Activated T-helper 1 cell treated with anti-CD3 and anti-CD28 coated beads, Interleukin-12 subunit alpha, Interleukin-12 subunit beta, Interleukin-2, Interleukin-4 antibody, amounts not matched to agents 30 ng/mL and 10 ng/mL and 1 ng/mL, durations not matched to agents 14 hours and 24 hours and 36 hours (primary cell): ENCODE measurements at regions of chr1 and their contacts with region 1.

Region 1: DNA sequence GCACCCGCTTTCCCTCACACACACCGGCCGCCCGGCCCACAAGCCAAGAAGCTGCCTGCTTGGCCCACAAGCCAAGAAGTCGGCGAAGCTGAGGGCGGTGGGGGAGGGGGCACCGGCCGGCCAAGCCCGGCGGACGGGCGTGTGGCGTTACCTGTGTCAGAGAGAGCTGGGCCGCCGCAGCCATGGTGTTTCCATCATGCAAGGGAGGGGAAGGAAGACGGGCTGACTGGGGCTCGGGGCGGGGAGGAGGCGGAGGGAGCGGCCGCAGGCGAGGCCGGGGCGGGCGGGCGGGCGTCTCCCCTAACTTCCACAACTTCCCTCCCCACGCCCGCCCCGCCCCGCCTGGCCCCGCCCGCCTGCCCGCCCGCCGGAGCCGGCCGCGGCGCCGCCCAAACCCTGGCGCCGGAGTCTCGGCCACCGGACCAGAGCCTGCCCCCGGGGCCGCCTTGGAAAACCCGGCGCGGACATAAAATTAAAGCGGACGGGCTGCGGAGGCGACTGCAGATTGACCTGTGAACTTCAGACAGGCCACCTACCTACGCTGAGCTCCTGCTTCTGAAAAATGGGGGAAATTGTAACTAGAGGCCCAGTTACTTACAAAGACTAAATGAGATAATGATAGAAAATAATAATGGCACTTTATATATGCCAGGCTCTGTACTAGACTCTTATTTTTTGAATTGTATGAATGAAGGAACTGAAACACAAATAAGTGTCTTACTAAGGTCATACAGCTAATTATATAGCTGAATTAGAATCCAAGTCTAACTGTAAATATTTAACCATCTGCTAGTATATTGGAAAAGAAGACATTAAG is at the start of gene EPS15:
- DNase-seq: peak; percentile 82
- H3K4me3 Mint-ChIP-seq: peak within 1 kb of the TSS; percentile 98
- H3K27ac Mint-ChIP-seq: peak within 1 kb of the TSS; percentile 98
- H3K4me1 Mint-ChIP-seq: peaks cover 61% of the 10 kb centered on the region
- H3K27me3 Mint-ChIP-seq: no peaks in the 10 kb centered on the region
- total RNA-seq, gene EPS15: 53.0 and 55.5 TPM in 2 replicates

Region 2: DNA sequence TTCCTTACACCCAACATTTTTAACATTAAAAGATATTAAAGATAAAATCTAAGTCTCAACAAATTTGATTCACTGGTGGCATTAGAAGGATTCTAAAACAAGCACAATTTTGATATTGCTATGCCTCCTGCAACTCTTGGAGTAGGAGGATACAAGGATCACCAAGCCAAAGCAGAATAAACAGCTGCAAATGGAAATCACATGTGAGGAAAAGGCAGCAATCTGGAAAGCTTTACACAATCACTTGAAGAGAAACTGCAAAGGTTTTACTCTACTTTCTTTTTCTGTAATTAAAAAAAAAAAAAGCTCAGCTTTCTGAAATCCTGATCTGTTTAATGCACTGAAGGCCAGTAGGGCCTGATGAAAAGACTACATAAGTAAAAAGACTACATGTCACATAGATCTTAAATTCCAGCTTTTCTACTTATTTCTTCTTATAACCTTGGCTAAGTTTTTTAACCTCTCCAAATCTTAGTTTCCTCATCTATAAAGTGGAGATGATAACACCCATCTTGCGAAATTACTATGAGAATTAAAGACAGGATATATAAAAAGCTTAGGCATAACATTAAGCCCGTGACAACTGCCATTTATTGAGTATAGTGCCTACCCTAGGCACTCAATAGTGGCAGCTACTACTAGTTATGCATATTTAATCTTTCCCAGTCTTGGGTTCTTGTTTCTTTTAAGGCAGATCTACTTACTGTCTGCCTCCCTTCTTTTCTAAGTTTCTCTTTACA is 73.7 kb before region 1 on chr1:
- intact Hi-C with region 1: loop called (anchors 5 kb)
- DNase-seq: no peak
- H3K4me3 Mint-ChIP-seq: no peak overlapping the region
- H3K27ac Mint-ChIP-seq: no peak overlapping the region
- H3K4me1 Mint-ChIP-seq: peaks cover 30% of the 10 kb centered on the region
- H3K27me3 Mint-ChIP-seq: no peaks in the 10 kb centered on the region

Region 3: DNA sequence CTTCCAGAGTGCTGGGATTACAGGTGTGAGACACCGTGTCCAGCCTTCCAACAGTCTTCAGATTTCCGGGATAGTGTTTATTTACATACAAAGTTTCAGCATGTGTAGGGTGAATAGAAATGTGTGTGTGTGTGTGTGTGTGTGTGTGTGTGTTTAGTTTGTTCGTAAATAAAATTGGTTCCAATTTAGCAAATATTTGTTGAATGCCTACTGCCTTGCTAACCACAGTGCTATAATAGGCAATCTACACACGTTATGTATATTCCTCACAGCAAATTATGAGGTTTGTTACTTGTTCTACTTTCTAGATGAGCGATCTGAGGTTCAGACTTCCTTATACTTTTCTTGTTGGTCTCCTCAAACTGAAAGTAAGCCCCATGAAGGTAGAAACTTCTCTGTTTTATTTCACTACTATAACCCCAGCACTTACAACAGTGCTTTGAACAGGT is 32.6 kb after region 1 on chr1:
- intact Hi-C with region 1: loop called (anchors 2 kb)
- DNase-seq: no peak
- H3K4me3 Mint-ChIP-seq: no peak overlapping the region
- H3K27ac Mint-ChIP-seq: no peak overlapping the region
- H3K4me1 Mint-ChIP-seq: peaks cover 21% of the 10 kb centered on the region
- H3K27me3 Mint-ChIP-seq: no peaks in the 10 kb centered on the region

Region 4: DNA sequence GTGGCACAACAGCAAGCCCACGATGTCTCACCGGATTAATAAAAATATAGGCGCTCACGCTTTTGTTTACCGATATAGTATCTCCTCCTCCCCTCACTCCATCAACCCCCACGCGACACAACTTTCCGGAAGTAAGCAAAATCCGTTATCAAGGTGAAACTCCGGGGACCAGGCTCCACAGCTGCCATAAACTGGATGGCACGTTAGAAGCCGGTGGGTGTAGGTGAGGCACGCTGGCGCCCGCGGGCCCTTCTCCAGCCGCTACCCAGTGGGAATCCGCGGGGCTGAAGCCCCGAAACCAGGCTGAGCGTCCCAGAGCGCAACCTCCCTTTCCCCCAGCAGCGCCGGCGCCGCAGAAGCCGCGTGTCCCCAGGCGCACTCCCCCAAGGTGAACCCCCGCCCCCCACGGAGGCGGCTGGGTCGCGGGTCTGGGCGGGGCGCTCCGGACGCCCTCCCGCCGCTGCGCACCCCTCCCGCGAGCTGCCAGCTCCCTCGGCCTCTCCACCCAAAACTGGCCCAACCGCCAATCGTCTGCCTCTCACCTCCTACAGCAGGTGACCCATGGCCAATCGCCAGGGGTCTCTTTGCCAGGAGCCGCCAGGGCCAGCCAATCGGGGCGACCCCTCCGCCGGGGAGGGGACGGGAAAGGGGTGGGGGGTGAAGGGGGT is 210.0 kb after region 1 on chr1:
- intact Hi-C with region 1: loop called (anchors 1 kb)
- DNase-seq: peak; percentile 94
- H3K4me3 Mint-ChIP-seq: peak overlapping the region; percentile 84
- H3K27ac Mint-ChIP-seq: peak overlapping the region; percentile 88
- H3K4me1 Mint-ChIP-seq: peaks cover 24% of the 10 kb centered on the region
- H3K27me3 Mint-ChIP-seq: no peaks in the 10 kb centered on the region

Region 5: DNA sequence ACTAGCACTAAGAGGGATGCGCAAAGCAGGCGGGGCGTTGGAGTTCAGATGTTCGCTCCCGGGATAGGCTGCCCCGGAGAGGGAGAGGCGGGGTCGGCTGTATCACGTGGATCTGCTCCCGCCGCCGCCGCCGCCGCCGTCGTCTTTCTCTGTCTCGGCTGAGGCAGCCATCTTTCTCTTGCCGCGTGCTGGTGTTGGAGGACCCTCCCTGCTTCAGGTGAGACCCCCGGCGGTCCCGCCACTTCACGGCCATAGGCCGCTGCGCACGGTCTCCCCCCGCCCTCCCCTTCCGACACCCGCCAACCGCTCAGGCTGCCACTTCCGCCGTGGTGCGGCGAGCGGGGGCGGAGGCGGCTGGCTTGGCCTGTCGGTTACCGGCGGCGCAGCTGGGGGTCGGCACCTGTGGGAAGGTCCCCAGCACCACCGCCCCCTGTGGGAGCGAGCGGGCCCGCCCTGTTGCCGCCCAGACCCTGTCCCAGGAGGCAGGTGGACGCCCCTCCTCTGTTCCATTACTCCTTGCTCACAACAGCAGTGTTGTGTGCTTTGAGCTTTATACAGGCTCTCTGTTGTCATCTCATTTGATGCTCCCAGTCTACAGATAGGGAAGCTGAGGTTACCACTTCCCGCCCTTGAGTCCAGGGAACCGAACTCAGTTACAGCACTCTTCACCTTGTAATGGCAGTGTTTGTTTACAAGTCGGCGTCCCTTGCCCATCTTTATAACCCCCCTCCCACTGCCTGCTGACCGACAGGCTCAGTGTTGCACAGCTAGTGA is 537.1 kb after region 1 on chr1 and contains the start of gene BTF3L4:
- intact Hi-C with region 1: loop called (anchors 1 kb)
- DNase-seq: peak; percentile 92
- H3K4me3 Mint-ChIP-seq: peak within 1 kb of the TSS; percentile 100
- H3K27ac Mint-ChIP-seq: peak within 1 kb of the TSS; percentile 100
- H3K4me1 Mint-ChIP-seq: peaks cover 72% of the 10 kb centered on the region
- H3K27me3 Mint-ChIP-seq: no peaks in the 10 kb centered on the region
- total RNA-seq, gene BTF3L4: 44.9 and 47.5 TPM in 2 replicates